ENCODE measurements at regions of chr4 and their contacts with region 1.

Region 1: DNA sequence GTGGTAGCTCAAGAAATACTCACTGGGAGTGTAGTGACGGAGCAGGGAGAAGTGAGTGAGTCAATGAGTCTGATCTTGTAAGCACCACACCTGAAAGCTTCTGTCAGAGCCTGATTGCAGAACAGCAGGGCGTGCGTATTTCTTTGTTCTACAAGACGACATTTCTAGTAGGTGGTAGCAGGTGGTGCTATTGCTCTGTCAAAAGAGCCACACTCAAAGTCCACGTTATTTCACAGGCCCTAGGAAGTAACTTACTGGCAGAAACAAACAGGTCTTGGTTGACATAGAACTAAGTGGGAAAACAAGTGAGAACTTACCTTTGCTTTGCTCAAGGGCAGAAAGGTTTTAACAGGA is 46.4 kb upstream of the SPRY1 start:
- DNase-seq: peak; percentile 73
- H3K4me3 Mint-ChIP-seq: no peak overlapping the region
- H3K27ac Mint-ChIP-seq: no peak overlapping the region
- H3K4me1 Mint-ChIP-seq: peaks cover 23% of the 10 kb centered on the region
- H3K27me3 Mint-ChIP-seq: no peaks in the 10 kb centered on the region
- CTCF ChIP-seq: peak; percentile 35

Region 2: DNA sequence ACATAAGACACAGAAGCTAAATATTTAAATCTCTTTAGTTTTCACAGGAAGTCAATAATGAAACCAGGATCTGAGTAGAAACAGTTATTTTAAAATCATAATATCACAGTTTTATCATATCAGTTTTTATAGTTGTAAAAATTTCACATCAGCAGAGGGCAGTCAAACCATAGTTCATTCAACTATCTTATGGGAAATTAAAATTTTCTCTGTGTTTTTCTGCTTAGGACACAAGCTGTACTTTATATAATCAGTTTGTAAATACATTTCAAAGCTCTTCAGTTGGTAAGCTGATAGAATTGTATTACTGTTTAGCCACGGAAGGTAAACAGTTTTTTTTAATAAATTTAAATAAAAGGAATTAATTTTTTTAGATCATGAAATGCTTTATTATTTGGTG is 222.9 kb before region 1 on chr4:
- CTCF ChIA-PET with region 1: interaction called, 12 read pairs
- POLR2A ChIA-PET with region 1: interaction called, 8 read pairs
- intact Hi-C with region 1: no loop called
- DNase-seq: peak; percentile 16
- H3K4me3 Mint-ChIP-seq: no peak overlapping the region
- H3K27ac Mint-ChIP-seq: no peak overlapping the region
- H3K4me1 Mint-ChIP-seq: no peaks in the 10 kb centered on the region
- H3K27me3 Mint-ChIP-seq: no peaks in the 10 kb centered on the region
- CTCF ChIP-seq: peak; percentile 42

Region 3: GRCh38 chr4:123284168-123284567 is 66.0 kb before region 1 on chr4:
- CTCF ChIA-PET with region 1: no interaction called
- POLR2A ChIA-PET with region 1: no interaction called
- intact Hi-C with region 1: no loop called
- DNase-seq: no peak
- H3K4me3 Mint-ChIP-seq: no peak overlapping the region
- H3K27ac Mint-ChIP-seq: no peak overlapping the region
- H3K4me1 Mint-ChIP-seq: no peaks in the 10 kb centered on the region
- H3K27me3 Mint-ChIP-seq: no peaks in the 10 kb centered on the region
- CTCF ChIP-seq: no peak

Region 4: GRCh38 chr4:123461996-123462395 is 111.8 kb after region 1 on chr4:
- CTCF ChIA-PET with region 1: no interaction called
- POLR2A ChIA-PET with region 1: no interaction called
- intact Hi-C with region 1: no loop called
- DNase-seq: peak; percentile 69
- H3K4me3 Mint-ChIP-seq: no peak overlapping the region
- H3K27ac Mint-ChIP-seq: no peak overlapping the region
- H3K4me1 Mint-ChIP-seq: no peaks in the 10 kb centered on the region
- H3K27me3 Mint-ChIP-seq: no peaks in the 10 kb centered on the region
- CTCF ChIP-seq: no peak